ENCODE measurements at regions of chr19 and their contacts with region 1.

Region 1: GRCh38 chr19:2079846-2080301 is 16.3 kb downstream of the MOB3A start:
- DNase-seq: no peak
- ATAC-seq: no peak
- H3K4me3 ChIP-seq: no peak overlapping the region
- H3K27ac ChIP-seq: no peak overlapping the region
- H3K4me1 ChIP-seq: peaks cover 0 to 45% (median 12%) of the 10 kb centered on the region in 9 donors
- H3K27me3 ChIP-seq: no peaks in the 10 kb centered on the region
- CTCF ChIP-seq: no peak

Region 2: DNA sequence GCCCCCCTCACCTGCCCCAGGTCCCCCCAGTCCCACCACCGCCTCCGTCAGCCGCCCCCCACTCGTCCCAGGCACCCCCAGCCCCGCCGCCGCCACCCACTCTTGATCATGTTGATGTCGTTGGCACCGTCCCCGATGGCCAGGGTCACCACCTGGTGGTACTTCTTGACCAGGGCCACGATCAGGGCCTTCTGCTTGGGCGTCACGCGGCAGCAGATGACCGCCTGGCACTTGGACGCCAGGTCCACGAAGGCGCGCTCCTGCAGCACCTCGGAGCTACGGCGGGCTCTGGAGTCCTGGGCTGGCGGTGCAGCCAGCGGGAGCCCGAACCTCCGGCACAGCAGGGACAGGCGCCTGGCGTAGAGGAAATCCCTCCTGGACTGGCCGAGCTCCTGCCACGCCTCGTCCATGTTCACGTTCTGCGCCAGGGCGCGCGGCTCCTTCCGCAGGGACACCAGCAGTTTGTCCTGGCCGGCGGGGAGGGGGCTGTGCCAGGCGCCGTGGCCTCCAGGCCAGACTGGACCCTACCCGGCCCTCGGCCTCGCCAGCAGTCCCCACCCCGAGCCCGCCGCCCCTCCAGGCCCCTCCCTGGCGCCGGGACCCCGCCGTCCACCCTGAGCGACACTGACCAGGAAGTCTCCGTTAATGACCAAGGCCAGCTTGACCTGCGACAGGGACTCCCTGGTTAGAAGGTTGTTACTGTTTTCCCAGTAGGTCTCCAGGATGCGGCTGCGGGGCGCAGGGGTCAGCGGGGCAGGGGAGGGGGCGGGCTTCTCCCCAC is 290.4 kb before region 1 on chr19:
- intact Hi-C with region 1: no loop called
- DNase-seq: no peak
- ATAC-seq: peak in 6 of 8 donors; percentile 24 to 42 (median 31)
- H3K4me3 ChIP-seq: peak overlapping the region in 8 of 10 donors; percentile 7 to 44 (median 32)
- H3K27ac ChIP-seq: peak overlapping the region in 1 of 10 donors; percentile 44
- H3K4me1 ChIP-seq: peaks cover 0 to 9% (median 5%) of the 10 kb centered on the region in 9 donors
- H3K27me3 ChIP-seq: peaks cover 0 to 48% (median 41%) of the 10 kb centered on the region in 7 donors
- CTCF ChIP-seq: no peak

Region 3: DNA sequence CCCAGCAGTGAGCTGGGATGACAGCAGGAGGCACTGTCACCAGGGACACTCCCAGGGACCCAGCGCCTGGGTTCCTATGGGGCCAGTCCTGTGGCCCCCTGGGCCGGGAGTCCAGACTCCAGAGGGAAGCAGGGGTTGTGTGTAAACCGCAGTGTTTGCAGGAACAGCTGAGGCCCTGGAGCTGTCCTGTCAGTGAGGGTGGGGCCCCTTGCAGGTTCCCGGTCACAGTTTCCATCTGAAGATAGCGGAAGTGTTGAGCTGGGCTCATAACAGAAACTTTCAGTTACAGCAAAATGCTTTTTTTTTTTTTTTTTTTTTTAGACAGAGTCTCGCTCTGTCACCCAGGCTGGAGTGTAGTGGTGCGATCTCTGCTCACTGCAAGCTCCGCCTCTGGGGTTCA is 156.6 kb before region 1 on chr19:
- intact Hi-C with region 1: loop called in 3 of 10 experiments (anchors 5 to 10 kb)
- DNase-seq: no peak
- ATAC-seq: peak in 4 of 8 donors; percentile 6 to 48 (median 32)
- H3K4me3 ChIP-seq: no peak overlapping the region
- H3K27ac ChIP-seq: no peak overlapping the region
- H3K4me1 ChIP-seq: peaks cover 0 to 3% (median 0%) of the 10 kb centered on the region in 9 donors
- H3K27me3 ChIP-seq: no peaks in the 10 kb centered on the region
- CTCF ChIP-seq: no peak

Measured in heart right ventricle (tissue), 16 donors.